Gastrocnemius medialis (tissue), 4 donors: ENCODE measurements at regions of chr3 and their contacts with region 1.

Region 1: GRCh38 chr3:20739814-20740213 is 553.8 kb upstream of the SGO1 start:
- DNase-seq: no peak
- ATAC-seq: peak; percentile 41 to 42
- H3K4me3 ChIP-seq: no peak overlapping the region
- H3K27ac ChIP-seq: no peak overlapping the region
- H3K4me1 ChIP-seq: peaks cover 0 to 5% of the 10 kb centered on the region in 2 donors
- H3K27me3 ChIP-seq: no peaks in the 10 kb centered on the region
- CTCF ChIP-seq: no peak
- POLR2A ChIP-seq: no peak

Region 2: GRCh38 chr3:20511863-20512505 is 227.8 kb before region 1 on chr3:
- in situ Hi-C with region 1: loop called in 2 of 4 experiments (anchors 5 to 10 kb)
- intact Hi-C with region 1: loop called (anchors 1 kb)
- DNase-seq: no peak
- ATAC-seq: peak; percentile 75 to 81
- H3K4me3 ChIP-seq: no peak overlapping the region
- H3K27ac ChIP-seq: no peak overlapping the region
- H3K4me1 ChIP-seq: no peaks in the 10 kb centered on the region
- H3K27me3 ChIP-seq: no peaks in the 10 kb centered on the region
- CTCF ChIP-seq: peak; percentile 48 to 70 (median 52)
- POLR2A ChIP-seq: no peak

Region 3: GRCh38 chr3:21094686-21095085 is 354.9 kb after region 1 on chr3:
- in situ Hi-C with region 1: no loop called
- intact Hi-C with region 1: no loop called
- DNase-seq: no peak
- ATAC-seq: no peak
- H3K4me3 ChIP-seq: no peak overlapping the region
- H3K27ac ChIP-seq: no peak overlapping the region
- H3K4me1 ChIP-seq: no peaks in the 10 kb centered on the region
- H3K27me3 ChIP-seq: no peaks in the 10 kb centered on the region
- CTCF ChIP-seq: no peak
- POLR2A ChIP-seq: no peak